CD14-positive monocyte (primary cell): ENCODE measurements at regions of chr14 and their contacts with region 1.

Region 1: DNA sequence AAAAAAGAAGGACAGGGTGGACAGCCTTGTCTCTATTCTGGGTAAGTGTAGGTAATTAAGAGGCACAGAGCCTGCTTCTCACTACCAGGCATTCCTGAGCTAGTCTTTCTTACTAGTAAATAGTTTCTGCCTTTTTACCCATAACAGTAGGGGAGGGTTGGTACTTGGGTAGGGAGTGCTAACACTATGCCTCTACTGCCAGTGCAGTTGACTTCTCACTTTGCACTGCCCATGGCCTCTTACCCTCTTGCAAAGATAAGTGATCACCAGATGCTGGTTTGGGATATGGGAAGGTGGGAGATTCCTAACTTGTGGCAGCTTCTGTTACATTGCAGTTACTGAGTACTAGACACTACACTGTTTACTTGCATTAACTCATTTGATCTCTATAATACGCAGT is 11.6 kb downstream of the AHSA1 start:
- DNase-seq: no peak
- H3K4me3 ChIP-seq: no peak overlapping the region
- H3K4me3 Mint-ChIP-seq: no peak overlapping the region
- H3K27ac ChIP-seq: no peak overlapping the region
- H3K27ac Mint-ChIP-seq: peak overlapping the region in 2 of 7 donors; percentile 30 to 57
- H3K4me1 ChIP-seq: no peaks in the 10 kb centered on the region
- H3K4me1 Mint-ChIP-seq: no peaks in the 10 kb centered on the region
- H3K27me3 ChIP-seq: no peaks in the 10 kb centered on the region
- H3K27me3 Mint-ChIP-seq: peaks cover 0 to 2% (median 0%) of the 10 kb centered on the region in 3 donors
- CTCF ChIP-seq: no peak

Region 2: DNA sequence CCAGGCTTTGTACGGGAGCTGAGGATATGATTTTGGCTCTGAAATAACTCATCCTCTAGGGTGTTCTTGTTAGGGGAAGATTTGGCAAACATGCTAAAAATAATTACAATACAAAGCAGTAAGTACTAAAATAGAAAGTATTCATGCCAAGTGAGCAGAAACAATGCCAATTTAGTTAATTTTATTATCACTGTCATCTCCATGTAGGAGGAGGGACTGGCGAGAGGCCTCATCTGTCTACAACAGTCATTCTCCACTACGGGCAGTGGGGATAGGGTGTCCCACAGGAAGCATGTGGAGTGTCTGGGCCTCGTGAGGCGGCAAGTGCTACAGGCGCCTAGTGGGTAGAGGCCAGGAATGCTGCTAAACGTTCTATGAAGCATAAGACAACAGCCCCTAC is 25.8 kb after region 1 on chr14:
- intact Hi-C with region 1: no loop called
- DNase-seq: no peak
- H3K4me3 ChIP-seq: no peak overlapping the region
- H3K4me3 Mint-ChIP-seq: no peak overlapping the region
- H3K27ac ChIP-seq: no peak overlapping the region
- H3K27ac Mint-ChIP-seq: no peak overlapping the region
- H3K4me1 ChIP-seq: peaks cover 8 to 19% of the 10 kb centered on the region in 2 donors
- H3K4me1 Mint-ChIP-seq: peaks cover 11% of the 10 kb centered on the region
- H3K27me3 ChIP-seq: peaks cover 23 to 29% of the 10 kb centered on the region in 2 donors
- H3K27me3 Mint-ChIP-seq: peaks cover 33 to 47% (median 36%) of the 10 kb centered on the region in 3 donors
- CTCF ChIP-seq: no peak

Region 3: DNA sequence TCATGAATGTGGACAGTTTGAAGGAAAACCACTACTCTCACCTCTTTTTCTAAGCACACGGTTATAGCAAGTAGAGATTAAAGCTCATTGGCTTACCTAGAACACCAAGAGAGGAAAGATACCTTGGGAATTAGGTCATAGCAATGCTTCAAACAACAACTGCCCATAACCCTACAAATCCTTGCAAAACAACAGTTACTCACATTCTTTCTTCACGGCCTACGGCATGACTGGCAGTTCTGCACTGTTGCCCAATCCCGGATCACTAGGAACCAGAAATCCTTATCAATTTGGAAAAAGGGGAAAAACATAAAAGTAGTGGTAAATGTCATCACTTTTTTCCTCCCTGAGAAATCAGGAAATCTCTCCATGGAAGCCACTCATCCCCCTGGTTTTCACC is 38.7 kb after region 1 on chr14:
- intact Hi-C with region 1: no loop called
- DNase-seq: no peak
- H3K4me3 ChIP-seq: no peak overlapping the region
- H3K4me3 Mint-ChIP-seq: no peak overlapping the region
- H3K27ac ChIP-seq: no peak overlapping the region
- H3K27ac Mint-ChIP-seq: peak overlapping the region in 2 of 7 donors; percentile 10 to 48
- H3K4me1 ChIP-seq: no peaks in the 10 kb centered on the region
- H3K4me1 Mint-ChIP-seq: no peaks in the 10 kb centered on the region
- H3K27me3 ChIP-seq: no peaks in the 10 kb centered on the region
- H3K27me3 Mint-ChIP-seq: peaks cover 0 to 1% (median 1%) of the 10 kb centered on the region in 3 donors
- CTCF ChIP-seq: no peak

Region 4: GRCh38 chr14:77526266-77526665 is 56.7 kb after region 1 on chr14:
- intact Hi-C with region 1: loop called in 1 of 2 experiments (anchors 10 kb)
- DNase-seq: no peak
- H3K4me3 ChIP-seq: no peak overlapping the region
- H3K4me3 Mint-ChIP-seq: no peak overlapping the region
- H3K27ac ChIP-seq: no peak overlapping the region
- H3K27ac Mint-ChIP-seq: peak overlapping the region in 1 of 7 donors; percentile 4
- H3K4me1 ChIP-seq: no peaks in the 10 kb centered on the region
- H3K4me1 Mint-ChIP-seq: no peaks in the 10 kb centered on the region
- H3K27me3 ChIP-seq: no peaks in the 10 kb centered on the region
- H3K27me3 Mint-ChIP-seq: no peaks in the 10 kb centered on the region
- CTCF ChIP-seq: no peak

Region 5: GRCh38 chr14:77565289-77565993 is 95.9 kb after region 1 on chr14:
- intact Hi-C with region 1: no loop called
- DNase-seq: peak; percentile 71 to 85 (median 85)
- H3K4me3 ChIP-seq: peak overlapping the region; percentile 13 to 64 (median 58)
- H3K4me3 Mint-ChIP-seq: peak overlapping the region; percentile 48 to 78
- H3K27ac ChIP-seq: peak overlapping the region; percentile 82 to 96
- H3K27ac Mint-ChIP-seq: peak overlapping the region; percentile 94 to 98 (median 97)
- H3K4me1 ChIP-seq: peaks cover 40 to 41% of the 10 kb centered on the region in 2 donors
- H3K4me1 Mint-ChIP-seq: peaks cover 44% of the 10 kb centered on the region
- H3K27me3 ChIP-seq: no peaks in the 10 kb centered on the region
- H3K27me3 Mint-ChIP-seq: peaks cover 0 to 2% (median 0%) of the 10 kb centered on the region in 3 donors
- CTCF ChIP-seq: no peak